CD4-positive, alpha-beta T cell (primary cell): ENCODE measurements at regions of chr14 and their contacts with region 1.

Region 1: DNA sequence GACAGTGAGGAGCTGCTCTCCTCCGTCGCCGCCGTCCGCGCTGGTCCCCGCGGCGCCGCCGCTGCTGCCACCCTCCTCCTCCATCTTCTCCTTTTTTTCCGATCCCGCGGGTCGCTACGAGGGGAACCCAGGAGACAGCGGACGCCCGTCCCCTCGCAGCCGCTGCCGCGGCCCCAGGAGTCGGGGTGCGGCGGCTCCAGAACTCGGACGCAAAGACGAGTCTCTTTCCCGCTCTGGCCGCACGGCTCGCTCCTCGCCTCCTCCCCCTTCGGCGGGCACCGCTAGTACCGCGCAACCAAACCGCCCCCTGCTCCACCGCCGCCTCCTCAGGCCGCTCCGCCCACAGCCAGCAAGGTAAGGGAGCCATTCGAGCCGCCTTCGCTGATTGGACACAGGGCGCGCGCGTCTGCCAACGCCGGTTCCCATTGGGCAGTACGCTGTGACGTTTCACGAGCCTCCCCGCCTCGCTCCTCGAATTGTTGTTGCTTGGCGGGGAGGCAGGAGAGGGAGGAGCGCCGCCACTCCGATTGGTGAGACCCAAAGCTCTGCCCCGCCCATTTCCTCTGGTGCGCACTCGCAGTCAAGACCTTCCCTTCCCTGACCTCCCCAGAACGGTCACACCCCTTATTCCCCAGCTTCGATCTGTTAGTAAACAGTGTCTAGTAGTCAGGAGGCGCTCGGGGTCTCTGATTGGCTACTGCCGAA is at the start of gene RPS6KA5:
- DNase-seq: peak; percentile 99 to 100 (median 100)
- ATAC-seq: peak; percentile 81
- H3K4me3 ChIP-seq: peak within 1 kb of the TSS; percentile 81
- H3K4me3 Mint-ChIP-seq: peak within 1 kb of the TSS; percentile 88
- H3K27ac ChIP-seq: peak within 1 kb of the TSS; percentile 80 to 91
- H3K27ac Mint-ChIP-seq: peak within 1 kb of the TSS; percentile 81
- H3K4me1 ChIP-seq: peaks cover 51% of the 10 kb centered on the region
- H3K4me1 Mint-ChIP-seq: peaks cover 64% of the 10 kb centered on the region
- H3K27me3 ChIP-seq: no peaks in the 10 kb centered on the region
- H3K27me3 Mint-ChIP-seq: no peaks in the 10 kb centered on the region
- CTCF ChIP-seq: no peak
- total RNA-seq, gene RPS6KA5: 28.0 to 29.8 TPM

Region 2: GRCh38 chr14:90758028-90758889 is 302.2 kb before region 1 on chr14:
- CTCF ChIA-PET with region 1: no interaction called
- POLR2A ChIA-PET with region 1: no interaction called
- intact Hi-C with region 1: loop called in 1 of 2 experiments (anchors 5 kb)
- DNase-seq: peak; percentile 82 to 99 (median 94)
- ATAC-seq: peak; percentile 83
- H3K4me3 ChIP-seq: peak overlapping the region; percentile 66
- H3K4me3 Mint-ChIP-seq: peak overlapping the region; percentile 91
- H3K27ac ChIP-seq: peak overlapping the region; percentile 63 to 84
- H3K27ac Mint-ChIP-seq: peak overlapping the region; percentile 89
- H3K4me1 ChIP-seq: peaks cover 21% of the 10 kb centered on the region
- H3K4me1 Mint-ChIP-seq: peaks cover 23% of the 10 kb centered on the region
- H3K27me3 ChIP-seq: no peaks in the 10 kb centered on the region
- H3K27me3 Mint-ChIP-seq: no peaks in the 10 kb centered on the region
- CTCF ChIP-seq: peak; percentile 88

Region 3: GRCh38 chr14:91035855-91036254 is 24.6 kb before region 1 on chr14:
- CTCF ChIA-PET with region 1: no interaction called
- POLR2A ChIA-PET with region 1: interaction called, 10 read pairs
- intact Hi-C with region 1: no loop called
- DNase-seq: peak in 1 of 14 experiments; percentile 9
- ATAC-seq: no peak
- H3K4me3 ChIP-seq: no peak overlapping the region
- H3K4me3 Mint-ChIP-seq: no peak overlapping the region
- H3K27ac ChIP-seq: no peak overlapping the region
- H3K27ac Mint-ChIP-seq: no peak overlapping the region
- H3K4me1 ChIP-seq: peaks cover 9% of the 10 kb centered on the region
- H3K4me1 Mint-ChIP-seq: peaks cover 69% of the 10 kb centered on the region
- H3K27me3 ChIP-seq: no peaks in the 10 kb centered on the region
- H3K27me3 Mint-ChIP-seq: no peaks in the 10 kb centered on the region
- CTCF ChIP-seq: no peak

Region 4: DNA sequence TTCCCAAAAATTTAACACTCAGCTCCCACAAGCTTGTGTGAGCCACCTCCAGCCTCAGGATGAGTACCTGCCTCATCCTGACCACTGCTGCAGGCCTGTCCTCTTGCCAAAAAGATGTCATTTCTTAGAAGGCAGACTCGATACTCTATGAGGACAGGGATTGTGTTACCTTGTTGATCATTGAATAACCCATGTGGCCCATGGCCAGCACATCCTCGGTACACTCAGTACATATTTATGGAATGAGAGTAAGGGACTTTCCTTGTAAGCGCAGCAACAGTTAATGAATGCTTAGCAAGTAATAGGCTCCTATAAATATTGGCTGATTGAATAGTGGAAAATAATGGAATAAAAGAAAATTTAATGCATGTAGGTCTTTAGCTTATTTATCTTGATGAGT is 38.1 kb after region 1 on chr14:
- CTCF ChIA-PET with region 1: no interaction called
- POLR2A ChIA-PET with region 1: interaction called, 16 read pairs
- intact Hi-C with region 1: no loop called
- DNase-seq: no peak
- ATAC-seq: no peak
- H3K4me3 ChIP-seq: no peak overlapping the region
- H3K4me3 Mint-ChIP-seq: no peak overlapping the region
- H3K27ac ChIP-seq: no peak overlapping the region
- H3K27ac Mint-ChIP-seq: no peak overlapping the region
- H3K4me1 ChIP-seq: no peaks in the 10 kb centered on the region
- H3K4me1 Mint-ChIP-seq: no peaks in the 10 kb centered on the region
- H3K27me3 ChIP-seq: no peaks in the 10 kb centered on the region
- H3K27me3 Mint-ChIP-seq: no peaks in the 10 kb centered on the region
- CTCF ChIP-seq: no peak

Region 5: DNA sequence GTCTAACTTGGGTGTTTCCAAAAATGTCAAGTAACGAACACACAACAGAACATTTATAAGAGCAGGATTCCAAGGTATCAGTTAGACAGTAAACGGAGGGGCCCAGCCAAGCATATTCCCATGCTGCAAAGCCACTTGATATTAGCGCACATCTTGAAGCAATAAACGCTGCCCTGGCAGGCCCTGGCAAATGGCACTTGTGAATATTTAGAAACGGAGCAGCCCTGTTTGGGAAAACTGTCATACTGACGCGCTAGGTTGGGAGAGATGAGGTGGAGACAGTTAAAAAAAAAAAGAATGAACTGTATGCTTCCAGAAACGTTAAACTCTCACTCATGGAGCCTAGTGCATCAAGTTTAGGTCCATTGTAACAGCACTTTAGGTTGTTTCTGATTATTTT is 62.7 kb after region 1 on chr14:
- CTCF ChIA-PET with region 1: no interaction called
- POLR2A ChIA-PET with region 1: no interaction called
- intact Hi-C with region 1: no loop called
- DNase-seq: no peak
- ATAC-seq: no peak
- H3K4me3 ChIP-seq: no peak overlapping the region
- H3K4me3 Mint-ChIP-seq: no peak overlapping the region
- H3K27ac ChIP-seq: no peak overlapping the region
- H3K27ac Mint-ChIP-seq: no peak overlapping the region
- H3K4me1 ChIP-seq: peaks cover 46% of the 10 kb centered on the region
- H3K4me1 Mint-ChIP-seq: peaks cover 51% of the 10 kb centered on the region
- H3K27me3 ChIP-seq: no peaks in the 10 kb centered on the region
- H3K27me3 Mint-ChIP-seq: no peaks in the 10 kb centered on the region
- CTCF ChIP-seq: no peak

Region 6: GRCh38 chr14:91138511-91139359 is 78.2 kb after region 1 on chr14:
- CTCF ChIA-PET with region 1: interaction called, 3 read pairs
- POLR2A ChIA-PET with region 1: interaction called, 5 read pairs
- intact Hi-C with region 1: loop called in 1 of 2 experiments (anchors 2 kb)
- DNase-seq: peak in 10 of 14 experiments; percentile 19 to 77 (median 30)
- ATAC-seq: peak; percentile 74
- H3K4me3 ChIP-seq: no peak overlapping the region
- H3K4me3 Mint-ChIP-seq: no peak overlapping the region
- H3K27ac ChIP-seq: no peak overlapping the region
- H3K27ac Mint-ChIP-seq: no peak overlapping the region
- H3K4me1 ChIP-seq: peaks cover 23% of the 10 kb centered on the region
- H3K4me1 Mint-ChIP-seq: peaks cover 36% of the 10 kb centered on the region
- H3K27me3 ChIP-seq: no peaks in the 10 kb centered on the region
- H3K27me3 Mint-ChIP-seq: no peaks in the 10 kb centered on the region
- CTCF ChIP-seq: peak; percentile 61

Region 7: DNA sequence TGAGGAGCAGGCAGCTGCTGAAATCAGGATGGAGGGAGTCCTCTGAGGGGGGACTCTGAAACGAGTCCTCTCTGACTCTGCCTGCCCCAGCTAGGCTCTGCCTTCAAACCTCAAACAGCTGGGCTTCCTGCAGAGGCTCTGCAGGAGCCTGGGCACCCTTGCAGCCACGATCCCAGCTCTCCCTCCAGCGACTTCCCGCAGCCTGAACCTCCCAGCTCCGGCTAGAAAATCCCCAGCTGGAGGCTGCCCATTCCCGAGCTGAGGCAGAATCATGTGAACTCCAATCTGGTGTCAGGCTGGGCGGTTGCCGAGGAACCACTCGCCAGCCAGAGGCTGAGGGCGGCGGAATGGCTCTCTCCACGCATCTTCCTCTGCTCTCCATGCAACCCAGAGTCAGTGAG is 184.0 kb after region 1 on chr14 and contains the start of gene GPR68:
- CTCF ChIA-PET with region 1: no interaction called
- POLR2A ChIA-PET with region 1: interaction called, 14 read pairs
- intact Hi-C with region 1: loop called (anchors 2 to 10 kb)
- DNase-seq: peak in 6 of 14 experiments; percentile 26 to 70 (median 58)
- ATAC-seq: no peak
- H3K4me3 ChIP-seq: peak within 1 kb of the TSS; percentile 65
- H3K4me3 Mint-ChIP-seq: peak within 1 kb of the TSS; percentile 90
- H3K27ac ChIP-seq: peak within 1 kb of the TSS; percentile 97
- H3K27ac Mint-ChIP-seq: peak within 1 kb of the TSS; percentile 85
- H3K4me1 ChIP-seq: peaks cover 91% of the 10 kb centered on the region
- H3K4me1 Mint-ChIP-seq: peaks cover 95% of the 10 kb centered on the region
- H3K27me3 ChIP-seq: no peaks in the 10 kb centered on the region
- H3K27me3 Mint-ChIP-seq: no peaks in the 10 kb centered on the region
- CTCF ChIP-seq: no peak
- total RNA-seq, gene GPR68: 2.8 to 2.9 TPM